HEK293T (cell line): ENCODE measurements at regions of chr6 and their contacts with region 1.

Region 1: DNA sequence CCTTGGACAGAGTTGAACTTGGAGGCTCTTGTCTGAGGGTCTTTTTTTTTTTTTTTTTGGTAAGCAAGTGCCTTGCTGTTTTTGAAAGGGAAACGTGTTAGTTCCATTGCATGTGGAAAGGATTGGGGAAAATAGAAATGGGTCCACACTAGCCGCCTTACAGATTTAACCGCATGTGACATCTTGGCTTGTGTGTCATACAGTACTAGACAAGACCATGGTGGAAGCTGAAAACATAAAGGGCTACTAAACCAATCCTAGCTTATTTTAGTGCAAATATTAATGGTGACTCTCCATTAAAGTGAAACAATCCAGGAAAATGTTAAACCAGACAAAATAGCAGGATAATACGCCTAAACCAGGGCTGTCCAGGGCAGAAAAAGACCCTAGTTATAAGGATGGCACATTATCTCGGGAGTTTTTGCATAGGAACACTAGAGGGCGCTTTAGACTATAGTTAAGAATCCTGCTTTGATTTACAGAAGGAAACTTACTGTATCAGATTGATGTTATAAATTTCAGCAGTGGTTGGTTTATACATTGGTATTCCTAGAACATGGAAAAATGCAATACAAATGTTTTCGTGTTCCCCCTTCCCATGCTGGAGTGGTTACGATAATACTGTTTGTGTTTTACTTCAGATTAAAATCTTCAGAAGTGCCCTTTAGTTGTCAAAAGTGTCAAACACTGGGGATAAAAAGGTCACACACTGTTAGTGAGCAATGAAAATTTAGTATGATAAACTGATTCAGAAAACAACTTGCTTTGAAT is 59.8 kb upstream of the DEK start:
- DNase-seq: peak; percentile 53

Region 2: DNA sequence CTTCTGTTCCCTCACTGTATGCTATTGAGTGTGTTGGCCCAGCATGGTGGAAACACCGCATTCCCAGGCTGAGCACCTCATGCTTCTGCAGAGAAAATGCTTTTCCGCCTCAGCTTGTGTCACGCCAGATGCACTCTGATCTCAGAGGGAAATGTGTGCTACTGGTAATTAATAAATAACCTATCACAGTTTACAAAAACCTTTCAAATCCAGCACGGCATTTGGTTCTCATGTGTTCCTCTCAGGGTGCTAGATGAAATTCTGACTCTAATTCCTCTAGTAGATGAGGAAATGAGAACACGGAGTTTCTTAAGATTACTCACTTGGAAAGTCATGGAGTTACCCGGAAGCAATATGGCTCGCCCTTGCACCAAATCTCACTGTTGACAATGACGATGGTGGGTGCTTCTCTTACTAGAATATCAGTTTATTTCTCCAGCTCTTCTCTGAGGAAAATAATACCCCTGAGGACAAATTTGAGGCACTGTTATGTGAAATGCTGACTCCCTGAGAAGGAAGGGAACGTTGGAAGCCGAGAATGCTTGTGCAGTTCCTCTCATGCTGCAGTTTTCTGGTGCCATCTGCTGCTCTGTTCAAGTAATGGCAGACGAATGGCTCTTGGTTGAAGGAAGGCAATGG is 179.6 kb after region 1 on chr6:
- CTCF ChIA-PET with region 1: interaction called, 15 read pairs
- POLR2A ChIA-PET with region 1: interaction called, 5 read pairs
- DNase-seq: peak; percentile 66